Naive thymus-derived CD8-positive, alpha-beta T cell (primary cell): ENCODE measurements at regions of chr18 and their contacts with region 1.

Region 1: DNA sequence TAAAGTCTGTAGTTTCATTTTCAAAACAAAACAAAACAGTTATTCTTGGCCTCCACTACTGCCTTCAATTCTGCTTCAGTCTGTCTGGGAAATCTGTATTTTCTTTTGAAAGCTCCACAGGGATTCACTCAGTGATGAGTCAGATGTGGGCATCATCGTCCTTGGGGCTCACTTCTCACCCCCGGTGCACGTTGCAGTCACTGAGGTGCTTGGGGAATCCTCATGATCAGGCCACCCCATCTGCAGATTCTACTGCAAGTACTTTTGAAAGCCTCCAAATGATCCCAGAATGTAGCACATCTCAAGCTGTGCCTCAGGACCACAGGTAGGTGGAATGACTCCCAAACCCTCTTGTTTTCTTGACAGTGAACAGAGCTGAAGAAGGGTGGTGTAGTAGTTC is 34.3 kb downstream of the LPIN2 start:
- DNase-seq: no peak
- ATAC-seq: peak in 1 of 2 donors; percentile 18
- H3K4me3 Mint-ChIP-seq: peak overlapping the region; percentile 66 to 96 (median 86)
- H3K27ac Mint-ChIP-seq: peak overlapping the region; percentile 88 to 99 (median 96)
- H3K4me1 Mint-ChIP-seq: peaks cover 38 to 89% (median 82%) of the 10 kb centered on the region in 4 donors
- H3K27me3 Mint-ChIP-seq: no peaks in the 10 kb centered on the region

Region 2: GRCh38 chr18:2964361-2965010 is 14.2 kb before region 1 on chr18:
- POLR2A ChIA-PET with region 1: interaction called, 160 read pairs
- DNase-seq: peak in 1 of 10 donors; percentile 19
- ATAC-seq: peak in 1 of 2 donors; percentile 17
- H3K4me3 Mint-ChIP-seq: peak overlapping the region; percentile 54 to 86 (median 74)
- H3K27ac Mint-ChIP-seq: peak overlapping the region; percentile 92 to 99 (median 98)
- H3K4me1 Mint-ChIP-seq: peaks cover 52 to 97% (median 87%) of the 10 kb centered on the region in 4 donors
- H3K27me3 Mint-ChIP-seq: no peaks in the 10 kb centered on the region

Region 3: DNA sequence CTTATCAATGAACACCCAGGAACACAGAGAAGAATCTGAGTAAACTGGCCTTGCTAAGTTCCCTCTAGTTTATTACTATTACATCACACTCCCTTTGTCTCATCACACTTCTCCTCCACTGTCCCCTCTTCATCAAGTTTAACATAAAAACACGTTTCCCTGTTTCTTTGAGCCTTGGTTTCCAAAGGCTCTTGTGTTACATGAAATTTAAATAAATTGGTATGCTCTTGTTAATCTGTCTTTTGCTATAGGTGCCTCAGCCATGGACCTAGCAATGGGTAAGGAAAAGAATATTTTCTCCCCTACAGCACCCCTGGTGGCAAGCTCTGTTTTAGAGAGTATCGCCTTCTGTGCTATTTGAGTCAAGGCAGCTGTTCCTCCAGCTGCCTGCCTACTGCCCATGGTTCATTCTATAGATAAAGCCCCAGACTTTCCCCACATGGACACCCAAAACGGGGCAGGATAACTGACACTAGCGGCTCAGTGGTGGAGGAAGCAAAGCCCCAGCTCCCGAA is 503.1 kb after region 1 on chr18:
- POLR2A ChIA-PET with region 1: no interaction called
- DNase-seq: peak in 2 of 10 donors; percentile 7 to 20
- ATAC-seq: peak; percentile 55 to 66
- H3K4me3 Mint-ChIP-seq: no peak overlapping the region
- H3K27ac Mint-ChIP-seq: peak overlapping the region in 1 of 10 donors; percentile 4
- H3K4me1 Mint-ChIP-seq: peaks cover 0 to 2% (median 0%) of the 10 kb centered on the region in 4 donors
- H3K27me3 Mint-ChIP-seq: peaks cover 0 to 6% (median 0%) of the 10 kb centered on the region in 5 donors